CD4-positive, alpha-beta memory T cell (primary cell): ENCODE measurements at regions of chr11 and their contacts with region 1.

Region 1: GRCh38 chr11:114400217-114400914 is at the starts of genes C11orf71 and RBM7:
- DNase-seq: peak; percentile 96 to 98 (median 98)
- H3K4me3 ChIP-seq: peak within 1 kb of the TSS; percentile 86 to 96
- H3K4me3 Mint-ChIP-seq: peak within 1 kb of the TSS; percentile 92 to 99 (median 97)
- H3K27ac ChIP-seq: peak within 1 kb of the TSS; percentile 97
- H3K27ac Mint-ChIP-seq: peak within 1 kb of the TSS; percentile 97 to 99 (median 99)
- H3K4me1 ChIP-seq: peaks cover 55% of the 10 kb centered on the region
- H3K4me1 Mint-ChIP-seq: peaks cover 33 to 63% (median 47%) of the 10 kb centered on the region in 4 donors
- H3K27me3 ChIP-seq: no peaks in the 10 kb centered on the region
- H3K27me3 Mint-ChIP-seq: no peaks in the 10 kb centered on the region
- total RNA-seq, gene C11orf71: 15.1 to 15.6 TPM
- total RNA-seq, gene RBM7: 35.8 to 43.0 TPM

Region 2: GRCh38 chr11:113314389-113315301 is 1085.7 kb before region 1 on chr11 and contains the start of gene TTC12:
- CTCF ChIA-PET with region 1: no interaction called
- POLR2A ChIA-PET with region 1: no interaction called
- intact Hi-C with region 1: loop called (anchors 5 kb)
- DNase-seq: peak; percentile 87 to 91 (median 89)
- H3K4me3 ChIP-seq: peak within 1 kb of the TSS; percentile 24 to 84
- H3K4me3 Mint-ChIP-seq: peak within 1 kb of the TSS; percentile 79 to 91 (median 88)
- H3K27ac ChIP-seq: peak within 1 kb of the TSS; percentile 85
- H3K27ac Mint-ChIP-seq: peak within 1 kb of the TSS; percentile 79 to 95 (median 94)
- H3K4me1 ChIP-seq: peaks cover 20% of the 10 kb centered on the region
- H3K4me1 Mint-ChIP-seq: peaks cover 27 to 52% (median 38%) of the 10 kb centered on the region in 4 donors
- H3K27me3 ChIP-seq: no peaks in the 10 kb centered on the region
- H3K27me3 Mint-ChIP-seq: no peaks in the 10 kb centered on the region
- total RNA-seq, gene TTC12: 69.2 to 75.1 TPM

Region 3: GRCh38 chr11:113773416-113774173 is 626.8 kb before region 1 on chr11 and contains the start of gene ZW10:
- CTCF ChIA-PET with region 1: no interaction called
- POLR2A ChIA-PET with region 1: no interaction called
- intact Hi-C with region 1: loop called (anchors 2 kb)
- DNase-seq: peak; percentile 90 to 92 (median 92)
- H3K4me3 ChIP-seq: peak within 1 kb of the TSS; percentile 64 to 91
- H3K4me3 Mint-ChIP-seq: peak within 1 kb of the TSS; percentile 89 to 99 (median 98)
- H3K27ac ChIP-seq: peak within 1 kb of the TSS; percentile 62
- H3K27ac Mint-ChIP-seq: peak within 1 kb of the TSS; percentile 88 to 98 (median 96)
- H3K4me1 ChIP-seq: peaks cover 19% of the 10 kb centered on the region
- H3K4me1 Mint-ChIP-seq: peaks cover 12 to 31% (median 22%) of the 10 kb centered on the region in 4 donors
- H3K27me3 ChIP-seq: no peaks in the 10 kb centered on the region
- H3K27me3 Mint-ChIP-seq: peaks cover 0 to 3% of the 10 kb centered on the region in 2 donors
- total RNA-seq, gene ZW10: 8.7 to 9.7 TPM

Region 4: DNA sequence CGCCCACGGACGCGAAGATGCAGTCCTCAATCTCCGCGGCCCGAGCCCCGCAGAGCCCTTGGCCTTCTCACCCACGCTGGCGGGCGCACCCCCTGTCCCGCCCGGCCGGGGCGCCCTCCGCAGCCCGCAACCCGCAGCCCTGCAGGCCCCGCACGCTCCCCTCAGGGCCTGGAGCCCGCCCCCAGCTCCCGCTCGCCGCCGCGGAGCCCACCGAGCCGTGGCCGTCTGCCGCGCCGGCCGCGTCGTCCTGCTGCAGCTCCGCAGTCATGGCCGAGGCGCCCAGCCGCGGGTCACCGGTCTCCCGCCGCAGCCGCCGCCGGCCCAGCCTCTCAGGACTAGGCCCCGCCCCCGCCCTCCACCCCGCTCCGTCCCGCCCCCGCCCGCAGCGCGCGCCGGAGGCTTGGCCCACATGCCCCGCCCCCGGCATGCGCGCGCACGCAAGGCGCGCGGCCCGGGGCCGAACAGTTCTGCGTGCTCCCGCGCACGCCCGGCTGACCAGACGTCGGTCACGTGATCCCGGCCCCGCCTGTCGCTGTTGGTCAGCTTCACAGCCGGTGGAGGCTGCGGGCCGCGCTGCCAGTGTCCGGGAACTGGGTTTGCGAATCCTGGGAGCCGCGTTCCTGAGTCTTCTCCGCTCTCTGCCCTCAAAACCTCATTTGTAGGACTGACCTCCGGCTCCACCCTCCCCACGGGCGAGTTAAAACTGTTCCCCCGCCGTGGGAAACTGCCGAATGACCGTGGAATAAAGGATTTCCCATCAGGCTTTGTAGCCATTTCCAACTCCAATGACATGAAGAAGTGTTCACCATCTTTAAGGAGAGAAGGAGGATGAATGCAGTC is 524.9 kb before region 1 on chr11 and contains the start of gene USP28:
- CTCF ChIA-PET with region 1: no interaction called
- POLR2A ChIA-PET with region 1: no interaction called
- intact Hi-C with region 1: loop called (anchors 1 kb)
- DNase-seq: peak; percentile 71 to 84 (median 76)
- H3K4me3 ChIP-seq: peak within 1 kb of the TSS; percentile 48 to 78
- H3K4me3 Mint-ChIP-seq: peak within 1 kb of the TSS; percentile 98 to 100 (median 99)
- H3K27ac ChIP-seq: peak within 1 kb of the TSS; percentile 68
- H3K27ac Mint-ChIP-seq: peak within 1 kb of the TSS; percentile 91 to 99 (median 98)
- H3K4me1 ChIP-seq: peaks cover 24% of the 10 kb centered on the region
- H3K4me1 Mint-ChIP-seq: peaks cover 23 to 55% (median 40%) of the 10 kb centered on the region in 4 donors
- H3K27me3 ChIP-seq: no peaks in the 10 kb centered on the region
- H3K27me3 Mint-ChIP-seq: no peaks in the 10 kb centered on the region
- total RNA-seq, gene USP28: 17.2 to 17.3 TPM

Region 5: DNA sequence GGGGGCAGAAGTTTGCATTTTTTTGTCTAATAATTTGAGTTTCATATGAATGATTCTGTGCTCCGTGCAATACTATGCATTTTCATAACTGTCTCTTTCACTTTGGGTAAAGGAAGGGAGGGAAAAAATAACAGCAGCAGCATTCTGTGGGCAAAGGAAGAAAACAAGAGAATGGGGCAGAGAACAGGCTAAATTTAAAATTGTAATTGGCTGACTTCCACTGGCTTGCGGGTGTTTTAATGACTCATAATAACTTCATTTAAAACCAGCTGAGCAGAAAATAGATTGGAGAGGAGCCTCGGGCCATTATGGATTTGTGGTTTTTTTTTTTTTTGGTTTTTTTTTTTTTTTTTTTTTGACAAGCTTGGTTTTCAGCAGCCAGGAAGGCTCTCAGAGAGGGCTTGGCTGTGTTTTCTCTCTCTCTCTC is 233.5 kb before region 1 on chr11:
- CTCF ChIA-PET with region 1: no interaction called
- POLR2A ChIA-PET with region 1: no interaction called
- intact Hi-C with region 1: loop called (anchors 5 kb)
- DNase-seq: peak; percentile 47 to 68 (median 64)
- H3K4me3 ChIP-seq: no peak overlapping the region
- H3K4me3 Mint-ChIP-seq: peak overlapping the region; percentile 21 to 83 (median 66)
- H3K27ac ChIP-seq: no peak overlapping the region
- H3K27ac Mint-ChIP-seq: peak overlapping the region; percentile 15 to 92 (median 81)
- H3K4me1 ChIP-seq: peaks cover 86% of the 10 kb centered on the region
- H3K4me1 Mint-ChIP-seq: peaks cover 57 to 100% (median 85%) of the 10 kb centered on the region in 4 donors
- H3K27me3 ChIP-seq: no peaks in the 10 kb centered on the region
- H3K27me3 Mint-ChIP-seq: no peaks in the 10 kb centered on the region

Region 6: GRCh38 chr11:114348200-114349191 is 51.9 kb before region 1 on chr11:
- CTCF ChIA-PET with region 1: interaction called, 5 read pairs
- POLR2A ChIA-PET with region 1: no interaction called
- intact Hi-C with region 1: loop called (anchors 2 kb)
- DNase-seq: peak in 4 of 5 donors; percentile 24 to 45 (median 38)
- H3K4me3 ChIP-seq: no peak overlapping the region
- H3K4me3 Mint-ChIP-seq: peak overlapping the region in 2 of 8 donors; percentile 33 to 40
- H3K27ac ChIP-seq: no peak overlapping the region
- H3K27ac Mint-ChIP-seq: no peak overlapping the region
- H3K4me1 ChIP-seq: no peaks in the 10 kb centered on the region
- H3K4me1 Mint-ChIP-seq: peaks cover 1 to 7% (median 5%) of the 10 kb centered on the region in 4 donors
- H3K27me3 ChIP-seq: no peaks in the 10 kb centered on the region
- H3K27me3 Mint-ChIP-seq: no peaks in the 10 kb centered on the region

Region 7: DNA sequence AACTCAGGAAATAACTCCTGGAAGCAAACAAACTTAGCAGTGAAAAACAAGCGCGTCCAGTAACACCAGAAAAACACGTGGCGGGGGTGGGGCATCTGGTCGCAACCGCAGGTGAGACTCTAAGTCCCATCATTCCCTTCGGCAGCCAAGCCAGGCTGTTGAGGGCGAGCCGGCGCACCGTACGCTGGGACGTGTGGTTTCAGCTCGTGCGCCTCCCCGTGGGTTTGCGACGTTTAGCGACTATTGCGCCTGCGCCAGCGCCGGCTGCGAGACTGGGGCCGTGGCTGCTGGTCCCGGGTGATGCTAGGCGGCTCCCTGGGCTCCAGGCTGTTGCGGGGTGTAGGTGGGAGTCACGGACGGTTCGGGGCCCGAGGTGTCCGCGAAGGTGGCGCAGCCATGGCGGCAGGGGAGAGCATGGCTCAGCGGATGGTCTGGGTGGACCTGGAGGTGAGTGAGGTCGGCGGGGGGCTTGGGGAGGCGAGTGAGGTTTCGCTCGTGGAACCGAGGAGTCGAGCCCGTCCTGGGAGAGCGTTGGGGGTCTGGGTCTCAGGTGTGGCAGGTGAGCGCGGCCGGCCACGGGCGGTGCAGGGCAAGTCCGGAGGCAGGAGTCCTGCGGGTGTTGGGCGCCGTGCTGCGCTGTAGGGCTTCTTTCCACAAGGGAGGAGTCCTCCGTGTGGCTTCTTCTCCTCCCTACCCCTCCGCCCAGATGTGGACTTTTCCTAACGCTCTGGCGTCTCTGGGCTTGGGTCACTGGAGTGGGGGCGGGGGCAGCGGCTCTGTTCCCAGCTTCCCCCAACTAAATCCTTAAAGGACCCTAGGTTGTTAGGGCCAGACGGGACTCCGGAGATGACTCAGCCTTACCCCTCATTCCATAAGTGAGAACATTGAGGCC is 39.1 kb after region 1 on chr11 and contains the start of gene REXO2:
- CTCF ChIA-PET with region 1: no interaction called
- POLR2A ChIA-PET with region 1: interaction called, 25 read pairs
- intact Hi-C with region 1: loop called (anchors 1 kb)
- DNase-seq: peak; percentile 91 to 94 (median 93)
- H3K4me3 ChIP-seq: peak within 1 kb of the TSS; percentile 71 to 98
- H3K4me3 Mint-ChIP-seq: peak within 1 kb of the TSS; percentile 93 to 99 (median 98)
- H3K27ac ChIP-seq: peak within 1 kb of the TSS; percentile 73
- H3K27ac Mint-ChIP-seq: peak within 1 kb of the TSS; percentile 92 to 98 (median 95)
- H3K4me1 ChIP-seq: peaks cover 32% of the 10 kb centered on the region
- H3K4me1 Mint-ChIP-seq: peaks cover 26 to 34% (median 30%) of the 10 kb centered on the region in 4 donors
- H3K27me3 ChIP-seq: no peaks in the 10 kb centered on the region
- H3K27me3 Mint-ChIP-seq: no peaks in the 10 kb centered on the region
- total RNA-seq, gene REXO2: 64.8 to 70.4 TPM